AG04449 (cell line): ENCODE measurements at regions of chr22 and their contacts with region 1.

Region 1: GRCh38 chr22:17171313-17172171 is 12.5 kb upstream of the HDHD5 start:
- DNase-seq: no peak
- H3K4me3 ChIP-seq: peak overlapping the region; percentile 78
- CTCF ChIP-seq: peak; percentile 99

Region 2: DNA sequence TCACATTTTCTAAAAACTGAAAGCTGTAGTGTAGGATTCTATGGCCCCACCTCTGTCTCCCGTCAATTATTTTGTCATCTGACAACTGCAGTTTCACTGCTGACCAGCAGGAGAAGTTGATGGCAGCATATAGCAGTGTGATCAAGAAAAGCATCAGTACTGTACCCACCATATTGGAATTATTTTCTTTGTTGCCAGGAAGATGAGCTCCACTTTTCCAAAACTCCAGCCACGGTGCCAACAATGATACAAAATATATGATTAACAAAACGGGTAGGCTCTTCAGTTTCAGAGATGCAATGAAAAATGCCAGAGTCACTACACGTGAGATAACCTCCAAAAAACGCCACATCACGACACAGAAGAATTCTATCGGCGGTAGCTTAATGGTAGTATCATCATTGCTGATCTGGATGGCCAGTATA is 387.6 kb before region 1 on chr22:
- CTCF ChIA-PET with region 1: no interaction called
- POLR2A ChIA-PET with region 1: no interaction called
- DNase-seq: no peak
- H3K4me3 ChIP-seq: no peak overlapping the region
- CTCF ChIP-seq: no peak

Region 3: GRCh38 chr22:17057959-17058814 is 113.4 kb before region 1 on chr22:
- CTCF ChIA-PET with region 1: interaction called, 27 read pairs
- POLR2A ChIA-PET with region 1: no interaction called
- DNase-seq: no peak
- H3K4me3 ChIP-seq: no peak overlapping the region
- CTCF ChIP-seq: peak; percentile 99

Region 4: DNA sequence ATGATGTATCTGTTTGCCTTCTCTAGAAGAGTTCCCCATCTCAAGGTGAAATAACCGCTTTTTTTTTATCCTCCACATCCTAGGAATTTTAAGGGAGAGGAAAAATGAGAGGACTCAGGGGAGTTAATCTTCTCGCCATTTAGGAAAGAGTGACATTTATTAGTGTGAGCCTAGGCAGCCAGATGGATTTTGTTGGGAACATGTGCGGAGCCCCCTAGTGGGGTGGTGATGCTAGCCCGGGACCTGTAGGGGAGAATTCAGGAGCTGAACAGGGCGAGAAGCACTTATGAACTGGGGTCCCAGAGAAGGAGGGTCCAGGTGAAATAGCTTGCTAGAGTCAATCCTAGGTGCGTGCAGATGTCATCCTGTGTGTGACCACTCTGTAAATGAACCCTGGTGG is 76.0 kb before region 1 on chr22:
- CTCF ChIA-PET with region 1: interaction called, 16 read pairs
- POLR2A ChIA-PET with region 1: no interaction called
- DNase-seq: no peak
- H3K4me3 ChIP-seq: no peak overlapping the region
- CTCF ChIP-seq: peak; percentile 35

Region 5: DNA sequence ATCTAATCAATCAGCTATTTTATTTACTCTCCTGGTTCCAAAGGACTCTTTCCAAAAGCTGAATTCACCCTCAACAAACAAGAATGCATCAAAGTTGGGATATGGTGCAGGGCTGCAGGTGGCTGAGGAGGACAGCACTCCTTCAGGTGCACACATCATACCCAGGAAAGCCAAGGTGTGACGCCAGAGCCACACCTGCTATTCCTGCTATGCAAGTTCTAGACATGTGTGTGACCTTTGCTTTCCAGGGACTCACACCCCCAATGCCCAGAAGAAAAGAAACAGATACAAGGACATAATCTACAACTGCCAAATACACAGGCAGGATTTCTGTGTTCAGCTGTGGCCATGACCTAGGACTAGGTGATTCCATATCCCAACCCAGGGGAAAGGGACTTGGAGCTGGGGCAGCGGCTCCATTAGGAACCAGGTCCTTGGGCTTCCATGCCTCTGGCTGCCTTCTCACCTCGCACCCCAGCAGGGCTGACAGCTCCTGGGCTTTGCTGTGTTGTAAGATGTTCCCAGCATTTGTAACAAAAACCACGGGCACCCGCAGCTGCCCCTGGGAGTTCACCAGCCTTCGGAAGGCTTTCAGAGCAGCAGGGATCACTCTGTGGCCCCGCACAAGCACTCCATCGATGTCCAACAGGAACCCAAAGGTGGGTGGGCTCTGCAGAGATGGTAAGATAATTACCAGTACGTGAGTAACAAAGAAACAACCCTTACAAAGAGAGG is 22.3 kb before region 1 on chr22:
- CTCF ChIA-PET with region 1: interaction called, 43 read pairs
- POLR2A ChIA-PET with region 1: interaction called, 3 read pairs
- DNase-seq: no peak
- H3K4me3 ChIP-seq: no peak overlapping the region
- CTCF ChIP-seq: no peak

Region 6: DNA sequence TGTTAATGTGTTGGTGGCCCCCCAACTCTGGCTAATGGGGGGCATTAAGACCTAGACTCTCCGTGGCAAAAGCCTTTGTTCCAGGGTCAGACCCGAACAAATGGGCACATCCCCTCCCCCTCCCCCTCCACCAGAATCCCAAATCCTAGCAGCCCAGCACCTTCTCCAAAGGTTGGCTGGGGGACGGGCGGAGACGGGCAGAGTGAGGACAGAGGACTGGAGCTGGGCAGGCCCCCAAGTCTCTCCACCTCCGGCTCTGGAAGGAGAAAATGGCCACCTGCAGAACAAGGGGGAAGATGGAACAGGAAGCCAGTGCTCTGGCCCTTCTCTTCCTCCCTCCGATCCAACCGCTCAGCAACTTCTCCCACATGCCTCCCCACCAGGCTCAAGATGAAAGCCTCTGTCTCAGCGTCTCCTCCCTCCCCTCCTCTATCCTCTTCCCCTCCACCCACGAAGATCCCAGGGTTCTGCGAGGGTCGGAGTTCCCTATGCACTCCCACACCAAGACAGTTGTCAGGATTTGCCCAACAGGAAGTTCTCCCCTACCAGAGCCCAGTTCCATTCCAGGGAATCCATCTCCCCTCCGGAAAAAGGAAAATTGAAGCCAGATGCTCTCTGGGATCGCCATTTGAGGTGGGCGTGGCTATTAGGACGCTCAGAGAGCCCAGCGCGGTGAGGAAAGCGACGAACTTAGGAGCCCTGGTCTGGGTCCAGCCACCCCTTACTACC is 27.6 kb after region 1 on chr22:
- CTCF ChIA-PET with region 1: interaction called, 214 read pairs
- POLR2A ChIA-PET with region 1: interaction called, 3 read pairs
- DNase-seq: no peak
- H3K4me3 ChIP-seq: peak overlapping the region; percentile 23
- CTCF ChIP-seq: no peak

Region 7: DNA sequence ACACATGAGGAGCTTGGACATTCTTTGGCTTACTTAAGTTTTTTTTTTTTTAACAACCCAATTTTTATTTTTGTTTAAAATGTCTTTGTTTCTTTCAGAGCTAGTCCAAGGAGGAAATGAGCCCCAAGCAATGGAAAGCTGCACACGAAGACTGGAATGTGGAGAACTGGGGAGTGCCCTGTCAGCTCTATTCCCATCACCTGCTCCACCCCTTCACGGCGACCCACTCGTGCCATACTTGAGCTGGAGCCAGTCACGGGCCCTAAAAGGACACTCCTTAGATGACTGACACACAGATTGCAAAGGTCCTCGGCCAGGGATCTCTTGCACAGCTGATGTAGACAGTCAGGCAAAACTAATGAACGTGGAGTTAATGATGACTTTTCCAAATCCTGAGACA is 381.2 kb after region 1 on chr22:
- CTCF ChIA-PET with region 1: interaction called, 12 read pairs
- POLR2A ChIA-PET with region 1: no interaction called
- DNase-seq: no peak
- H3K4me3 ChIP-seq: no peak overlapping the region
- CTCF ChIP-seq: no peak